ENCODE measurements at regions of chr5 and their contacts with region 1.

Region 1: DNA sequence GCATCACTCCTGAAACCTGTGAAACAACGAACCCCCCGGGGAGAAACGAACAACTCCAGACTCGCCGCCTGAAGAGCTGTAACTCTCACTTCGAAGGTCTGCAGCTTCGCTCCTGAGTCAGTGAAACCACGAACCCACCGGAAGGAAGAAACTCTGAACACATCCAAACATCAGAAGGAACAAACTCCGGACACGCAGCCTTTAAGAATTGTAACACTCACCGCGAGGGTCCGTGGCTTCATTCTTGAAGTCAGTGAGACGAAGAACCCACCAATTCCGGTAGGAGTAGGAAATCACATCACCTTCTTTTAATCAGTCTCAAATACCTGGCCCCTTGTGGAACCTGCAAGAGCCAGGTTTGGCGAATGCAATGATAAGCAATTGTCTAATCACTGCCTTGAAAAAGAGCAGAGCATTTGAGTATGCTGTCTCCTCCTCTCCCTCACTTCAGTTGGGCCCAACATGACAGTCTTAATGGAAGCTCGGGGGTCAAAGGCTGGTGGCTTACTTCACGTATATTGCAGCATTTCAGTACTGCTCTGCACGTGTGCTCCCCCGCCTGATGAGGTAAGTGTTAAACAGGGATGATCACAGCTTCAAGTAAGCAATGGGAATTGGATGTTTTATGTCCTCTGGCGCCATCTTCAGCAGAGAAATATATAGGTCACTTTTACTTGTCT is 473 bp downstream of the IRGM start:
- DNase-seq: peak; percentile 76
- H3K4me3 Mint-ChIP-seq: peak overlapping the region; percentile 73
- H3K27ac Mint-ChIP-seq: peak overlapping the region; percentile 96
- H3K4me1 Mint-ChIP-seq: peaks cover 24% of the 10 kb centered on the region
- H3K27me3 Mint-ChIP-seq: no peaks in the 10 kb centered on the region

Region 2: GRCh38 chr5:150458819-150459557 is 387.8 kb before region 1 on chr5:
- CTCF ChIA-PET with region 1: interaction called, 16 read pairs
- DNase-seq: peak; percentile 89
- H3K4me3 Mint-ChIP-seq: peak overlapping the region; percentile 19
- H3K27ac Mint-ChIP-seq: peak overlapping the region; percentile 74
- H3K4me1 Mint-ChIP-seq: peaks cover 45% of the 10 kb centered on the region
- H3K27me3 Mint-ChIP-seq: no peaks in the 10 kb centered on the region

Region 3: DNA sequence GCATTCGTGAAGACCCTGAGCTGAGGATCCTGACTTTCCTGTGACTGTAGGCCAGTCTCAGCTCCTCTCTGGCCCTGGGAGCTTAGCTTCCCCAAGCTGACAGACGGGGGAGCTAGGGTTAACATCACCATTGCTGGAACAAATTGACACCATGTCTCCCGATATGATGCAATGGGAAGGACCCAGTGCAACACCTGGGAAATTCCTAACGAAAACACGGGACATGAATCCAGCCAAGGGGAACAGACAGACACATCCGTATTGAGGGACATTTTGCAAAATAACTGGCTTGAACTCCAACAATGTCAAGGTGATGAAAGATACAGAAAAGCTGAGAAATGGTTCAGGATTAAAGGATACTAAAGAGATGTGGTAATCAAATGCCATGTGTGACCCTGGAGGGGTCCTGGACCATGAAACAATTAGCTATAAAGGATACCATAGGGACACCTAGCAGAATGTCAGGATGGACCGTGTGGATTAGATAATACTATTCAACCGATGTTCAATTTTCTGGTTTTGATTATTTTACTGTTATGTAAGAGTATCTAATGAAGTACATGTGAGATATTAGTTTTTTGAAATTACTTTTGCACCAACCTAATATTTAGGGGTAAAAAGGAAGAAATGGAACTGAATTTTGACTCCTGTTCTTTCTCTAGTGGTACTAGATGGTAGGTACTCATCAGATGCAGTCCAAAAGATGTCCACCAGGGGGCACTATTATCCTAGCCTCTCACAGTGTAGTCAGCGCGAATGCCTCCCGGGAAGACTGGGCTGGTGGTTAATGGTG is 286.2 kb before region 1 on chr5:
- CTCF ChIA-PET with region 1: interaction called, 81 read pairs
- DNase-seq: peak; percentile 91
- H3K4me3 Mint-ChIP-seq: no peak overlapping the region
- H3K27ac Mint-ChIP-seq: no peak overlapping the region
- H3K4me1 Mint-ChIP-seq: no peaks in the 10 kb centered on the region
- H3K27me3 Mint-ChIP-seq: peaks cover 7% of the 10 kb centered on the region

Region 4: GRCh38 chr5:150656191-150657132 is 190.3 kb before region 1 on chr5:
- CTCF ChIA-PET with region 1: interaction called, 11 read pairs
- DNase-seq: peak; percentile 85
- H3K4me3 Mint-ChIP-seq: peak overlapping the region; percentile 78
- H3K27ac Mint-ChIP-seq: no peak overlapping the region
- H3K4me1 Mint-ChIP-seq: peaks cover 13% of the 10 kb centered on the region
- H3K27me3 Mint-ChIP-seq: peaks cover 22% of the 10 kb centered on the region

Region 5: DNA sequence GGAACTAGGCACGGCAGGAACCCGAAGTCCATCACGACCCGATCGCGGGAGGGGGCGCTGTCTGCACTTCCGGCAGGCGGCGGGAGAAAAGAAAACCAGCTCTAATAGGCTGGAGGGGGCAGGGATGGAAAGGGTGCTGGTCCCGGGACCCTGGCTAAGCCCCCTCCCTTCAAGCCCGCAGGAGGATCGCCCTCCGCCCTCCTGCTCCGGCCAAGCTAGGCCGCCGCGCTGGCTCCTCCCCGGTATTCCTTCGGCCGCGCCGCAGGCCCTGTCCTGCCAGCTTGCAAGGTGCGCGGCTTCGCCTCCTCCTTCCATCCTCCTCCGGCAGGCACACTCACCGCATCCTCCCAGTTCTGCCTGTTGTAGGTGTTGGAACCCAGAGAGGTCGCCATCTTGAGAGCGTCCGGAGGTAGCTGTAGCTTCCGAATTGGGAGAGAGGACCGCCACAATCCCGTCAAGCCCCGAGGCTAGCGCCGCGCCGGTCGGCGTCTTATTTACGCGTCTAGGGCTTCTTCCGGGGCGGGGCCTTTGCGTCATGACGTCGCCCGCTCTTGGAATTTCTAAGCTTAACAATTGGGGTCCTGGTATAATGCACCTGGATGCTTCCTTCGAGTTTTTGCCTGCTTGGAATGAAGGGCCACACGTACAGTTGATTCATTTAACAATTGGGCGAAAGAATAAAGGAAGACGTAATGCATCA is 146.1 kb before region 1 on chr5 and contains the start of gene RBM22:
- CTCF ChIA-PET with region 1: interaction called, 28 read pairs
- DNase-seq: peak; percentile 95
- H3K4me3 Mint-ChIP-seq: no peak within 1 kb of the TSS
- H3K27ac Mint-ChIP-seq: no peak within 1 kb of the TSS
- H3K4me1 Mint-ChIP-seq: peaks cover 10% of the 10 kb centered on the region
- H3K27me3 Mint-ChIP-seq: no peaks in the 10 kb centered on the region

Region 6: GRCh38 chr5:150778517-150779396 is 68.0 kb before region 1 on chr5 and contains the start of gene SMIM3:
- CTCF ChIA-PET with region 1: interaction called, 55 read pairs
- DNase-seq: peak; percentile 83
- H3K4me3 Mint-ChIP-seq: peak within 1 kb of the TSS; percentile 100
- H3K27ac Mint-ChIP-seq: peak within 1 kb of the TSS; percentile 88
- H3K4me1 Mint-ChIP-seq: peaks cover 59% of the 10 kb centered on the region
- H3K27me3 Mint-ChIP-seq: peaks cover 3% of the 10 kb centered on the region

Region 7: DNA sequence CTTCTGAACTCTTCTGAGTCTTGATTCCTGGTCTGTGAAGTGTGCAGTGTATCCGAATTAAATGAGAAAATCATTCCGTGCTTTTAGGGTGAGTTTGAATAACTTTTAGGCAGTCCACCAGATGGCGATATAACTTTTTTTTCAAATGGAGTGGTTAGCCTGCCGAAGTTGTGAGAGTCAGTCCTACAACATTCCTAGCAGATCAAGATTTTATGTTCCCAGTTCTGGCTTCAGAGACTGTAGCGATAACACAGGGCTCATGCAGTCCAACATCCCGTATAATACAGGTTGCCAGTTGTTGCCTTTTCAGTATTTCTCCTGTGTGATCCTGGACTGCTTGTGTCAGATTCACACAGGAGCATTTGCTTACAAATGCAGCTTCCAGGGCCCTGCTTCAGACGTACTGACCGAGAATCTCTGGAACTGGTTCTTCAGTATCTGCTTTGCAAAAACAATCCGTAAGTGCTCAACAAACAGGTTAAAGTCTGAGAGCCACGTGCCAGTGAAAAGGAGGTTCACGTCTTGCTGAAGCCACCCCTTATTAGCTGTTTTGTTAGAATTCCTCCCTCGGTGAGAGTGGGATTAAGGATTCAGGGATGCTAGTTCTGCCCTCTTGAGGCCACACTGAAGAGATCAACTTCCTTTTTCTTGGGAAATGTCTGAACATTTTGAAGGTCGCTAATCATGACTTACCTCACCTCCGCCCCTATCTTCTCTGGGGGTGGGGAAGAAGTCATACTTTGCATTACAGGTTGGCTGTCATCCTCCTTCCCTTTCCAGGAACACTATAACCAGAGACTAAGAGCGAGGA is 45.5 kb before region 1 on chr5:
- CTCF ChIA-PET with region 1: interaction called, 58 read pairs
- DNase-seq: no peak
- H3K4me3 Mint-ChIP-seq: no peak overlapping the region
- H3K27ac Mint-ChIP-seq: no peak overlapping the region
- H3K4me1 Mint-ChIP-seq: peaks cover 12% of the 10 kb centered on the region
- H3K27me3 Mint-ChIP-seq: no peaks in the 10 kb centered on the region

Measured in activated naive CD4-positive, alpha-beta T cell treated with anti-CD3 and anti-CD28 coated beads, Interleukin-2, amount 10 ng/mL, durations not matched to agents 7 days and 5 days (primary cell).